WTC11 (cell line): ENCODE measurements at regions of chr12 and their contacts with region 1.

Region 1: DNA sequence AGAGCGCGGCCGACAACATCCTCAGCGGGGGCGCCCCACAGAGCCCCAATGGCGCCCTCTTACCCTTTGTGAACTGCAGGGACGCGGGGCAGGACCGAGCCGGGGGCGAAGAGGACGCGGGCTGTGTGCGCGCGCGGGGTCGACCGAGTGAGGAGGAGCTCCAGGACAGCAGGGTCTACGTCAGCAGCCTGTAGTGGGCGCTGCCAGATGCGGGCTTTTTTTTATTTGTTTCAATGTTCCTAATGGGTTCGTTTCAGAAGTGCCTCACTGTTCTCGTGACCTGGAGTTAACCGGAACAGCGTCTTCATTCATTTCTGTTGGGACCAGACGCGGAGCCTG is 103.8 kb upstream of the FKBP4 start:
- DNase-seq: peak; percentile 72
- ATAC-seq: peak; percentile 86
- H3K4me3 Mint-ChIP-seq: peak overlapping the region; percentile 74
- H3K27ac Mint-ChIP-seq: no peak overlapping the region
- H3K4me1 Mint-ChIP-seq: peaks cover 27% of the 10 kb centered on the region
- H3K27me3 Mint-ChIP-seq: peaks cover 28% of the 10 kb centered on the region
- CTCF ChIP-seq: no peak

Region 2: DNA sequence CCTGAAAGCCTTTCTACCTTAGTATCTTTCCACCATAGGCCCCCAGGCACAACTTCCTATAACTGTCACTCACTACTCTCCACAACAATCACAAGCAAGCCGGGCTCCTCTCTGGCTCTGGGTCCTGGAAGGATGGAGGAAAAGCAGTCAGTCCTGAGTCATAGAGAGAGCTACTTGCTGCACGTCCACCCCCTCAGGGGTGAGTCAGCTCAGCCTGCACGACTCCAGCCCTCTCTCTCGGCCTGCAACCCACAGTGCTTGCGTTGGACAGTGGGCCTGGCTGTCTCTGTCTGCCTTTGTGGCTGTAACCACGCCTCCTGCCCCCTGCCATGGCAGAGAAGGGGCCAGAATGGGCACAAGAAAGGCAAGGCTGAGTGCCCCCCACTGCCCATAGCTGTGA is 50.3 kb before region 1 on chr12:
- CTCF ChIA-PET with region 1: interaction called, 17 read pairs
- POLR2A ChIA-PET with region 1: no interaction called
- DNase-seq: peak; percentile 11
- ATAC-seq: peak; percentile 43
- H3K4me3 Mint-ChIP-seq: no peak overlapping the region
- H3K27ac Mint-ChIP-seq: peak overlapping the region; percentile 40; the same call in 1 of the 2 replicates
- H3K4me1 Mint-ChIP-seq: peaks cover 36% of the 10 kb centered on the region
- H3K27me3 Mint-ChIP-seq: no peaks in the 10 kb centered on the region
- CTCF ChIP-seq: no peak

Region 3: DNA sequence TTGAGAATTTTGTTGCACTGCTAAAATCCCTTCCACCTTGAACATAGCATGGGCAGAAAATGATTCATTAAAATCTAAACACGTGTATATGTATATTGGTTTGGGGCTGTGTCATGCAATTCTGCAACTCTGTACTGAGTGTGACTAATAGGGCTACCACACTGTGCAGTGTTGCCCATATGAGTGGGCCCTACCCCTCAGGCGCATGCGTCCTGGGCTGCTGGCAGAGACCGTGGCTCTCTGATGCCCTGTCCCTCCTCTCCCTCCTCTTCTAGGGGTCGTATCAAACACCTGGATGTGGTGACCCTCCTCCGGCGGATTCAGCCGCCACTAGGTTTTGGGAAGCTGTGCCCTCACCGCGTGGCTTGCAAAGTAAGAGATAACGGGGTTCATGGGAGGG is 24.6 kb before region 1 on chr12:
- CTCF ChIA-PET with region 1: no interaction called
- POLR2A ChIA-PET with region 1: no interaction called
- DNase-seq: peak; percentile 2
- ATAC-seq: no peak
- H3K4me3 Mint-ChIP-seq: no peak overlapping the region
- H3K27ac Mint-ChIP-seq: no peak overlapping the region
- H3K4me1 Mint-ChIP-seq: no peaks in the 10 kb centered on the region
- H3K27me3 Mint-ChIP-seq: no peaks in the 10 kb centered on the region
- CTCF ChIP-seq: no peak

Region 4: GRCh38 chr12:2739817-2740641 is 49.1 kb after region 1 on chr12:
- CTCF ChIA-PET with region 1: interaction called, 15 read pairs
- POLR2A ChIA-PET with region 1: no interaction called
- DNase-seq: no peak
- ATAC-seq: peak; percentile 27
- H3K4me3 Mint-ChIP-seq: no peak overlapping the region
- H3K27ac Mint-ChIP-seq: no peak overlapping the region
- H3K4me1 Mint-ChIP-seq: peaks cover 11% of the 10 kb centered on the region
- H3K27me3 Mint-ChIP-seq: no peaks in the 10 kb centered on the region; the same call in 1 of the 2 replicates
- CTCF ChIP-seq: 0 out of 2 replicates have a peak, but pooled peaks have one; percentile 32

Region 5: DNA sequence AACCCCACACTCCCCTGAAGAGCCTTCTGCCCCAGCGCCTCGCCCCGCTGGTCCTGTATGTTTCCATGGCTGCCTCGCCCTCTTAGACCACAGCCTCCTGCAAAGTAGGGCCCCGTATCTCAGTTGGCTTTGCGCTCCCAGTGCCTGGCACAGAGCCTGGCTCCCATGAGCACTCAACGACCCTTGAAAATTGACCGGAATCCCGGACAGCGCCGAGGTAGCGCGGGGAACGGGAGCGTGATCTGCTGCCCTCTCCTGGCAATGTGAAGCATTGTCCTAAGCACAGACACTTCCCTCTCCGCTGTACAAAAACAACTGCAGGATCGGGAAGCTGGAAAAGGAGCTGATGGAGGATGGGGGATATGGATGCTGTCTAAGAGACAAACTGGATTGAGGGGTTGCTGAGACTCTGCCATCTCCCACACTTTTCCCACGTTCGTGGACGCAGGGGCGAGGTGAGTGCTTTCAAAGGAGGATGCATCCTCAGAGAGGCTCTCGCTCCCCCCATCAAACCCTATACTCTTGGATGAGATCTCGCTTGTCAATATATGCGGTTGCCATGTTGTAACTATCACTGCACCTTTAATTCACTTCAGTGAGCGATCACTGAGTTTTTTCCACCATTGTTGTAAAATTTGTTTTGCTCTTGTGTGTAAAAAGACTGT is 93.1 kb after region 1 on chr12:
- CTCF ChIA-PET with region 1: interaction called, 37 read pairs
- POLR2A ChIA-PET with region 1: no interaction called
- DNase-seq: peak; percentile 79
- ATAC-seq: peak; percentile 92
- H3K4me3 Mint-ChIP-seq: peak overlapping the region; percentile 23; the same call in 1 of the 2 replicates
- H3K27ac Mint-ChIP-seq: no peak overlapping the region
- H3K4me1 Mint-ChIP-seq: peaks cover 14% of the 10 kb centered on the region
- H3K27me3 Mint-ChIP-seq: peaks cover 20% of the 10 kb centered on the region
- CTCF ChIP-seq: peak; percentile 85